GM12878 (cell line): ENCODE measurements at regions of chrX and their contacts with region 1.

Region 1: GRCh38 chrX:30275498-30275897 is 28.6 kb downstream of the MAGEB1 start:
- DNase-seq: no peak
- ATAC-seq: no peak
- H3K4me3 ChIP-seq: no peak overlapping the region
- H3K27ac ChIP-seq: no peak overlapping the region
- H3K4me1 ChIP-seq: no peaks in the 10 kb centered on the region
- H3K27me3 ChIP-seq: peaks cover 0 to 2% of the 10 kb centered on the region in 2 experiments; a peak in 1 of 4 replicates
- CTCF ChIP-seq: peak in 1 of 3 experiments; percentile 39; a peak in 1 of 6 replicates
- EP300 ChIP-seq: no peak
- POLR2A ChIP-seq: no peak
- RAD21 ChIP-seq: peak; percentile 34; the same call in 1 of the 2 replicates

Region 2: GRCh38 chrX:30488092-30488491 is 212.6 kb after region 1 on chrX:
- CTCF ChIA-PET with region 1: interaction called, 3 read pairs
- POLR2A ChIA-PET with region 1: no interaction called
- RAD21 ChIA-PET with region 1: no interaction called
- SMC1A ChIA-PET with region 1: no interaction called
- in situ Hi-C with region 1: no loop called
- intact Hi-C with region 1: loop called (anchors 1 kb)
- DNase-seq: no peak
- ATAC-seq: peak; percentile 83
- H3K4me3 ChIP-seq: no peak overlapping the region
- H3K27ac ChIP-seq: no peak overlapping the region
- H3K4me1 ChIP-seq: no peaks in the 10 kb centered on the region; the same call in 1 of the 2 replicates
- H3K27me3 ChIP-seq: no peaks in the 10 kb centered on the region
- CTCF ChIP-seq: peak; percentile 29 to 44 (median 39); a peak in 4 of 6 replicates
- EP300 ChIP-seq: no peak
- POLR2A ChIP-seq: no peak
- RAD21 ChIP-seq: peak; percentile 52

Region 3: DNA sequence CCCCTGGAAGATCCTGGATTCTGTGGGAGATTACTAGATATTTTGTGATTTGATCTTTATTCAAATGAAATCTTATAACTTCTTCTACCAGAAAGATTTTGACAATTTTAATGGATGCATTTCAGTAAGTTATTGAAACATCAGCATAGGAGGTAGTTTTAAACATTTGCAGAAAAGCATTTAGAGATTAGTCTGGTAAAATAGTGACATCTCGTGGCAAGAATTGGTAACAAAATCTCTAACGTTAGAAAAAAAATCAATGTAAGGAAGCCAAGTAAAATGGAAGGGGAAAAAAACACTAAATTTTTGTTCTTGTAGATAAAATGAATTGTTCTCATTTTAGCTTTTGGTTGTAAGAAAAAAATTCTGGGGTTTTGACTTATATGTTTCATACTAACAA is 228.8 kb after region 1 on chrX:
- CTCF ChIA-PET with region 1: interaction called, 3 read pairs
- POLR2A ChIA-PET with region 1: no interaction called
- RAD21 ChIA-PET with region 1: no interaction called
- SMC1A ChIA-PET with region 1: no interaction called
- in situ Hi-C with region 1: loop called (anchors 10 kb)
- intact Hi-C with region 1: loop called (anchors 2 kb)
- DNase-seq: peak; percentile 5
- ATAC-seq: peak; percentile 27; the same call in 1 of the 3 replicates
- H3K4me3 ChIP-seq: no peak overlapping the region
- H3K27ac ChIP-seq: no peak overlapping the region
- H3K4me1 ChIP-seq: no peaks in the 10 kb centered on the region
- H3K27me3 ChIP-seq: no peaks in the 10 kb centered on the region
- CTCF ChIP-seq: peak; percentile 38 to 66 (median 49); a peak in 5 of 6 replicates
- EP300 ChIP-seq: no peak
- POLR2A ChIP-seq: no peak
- RAD21 ChIP-seq: peak; percentile 65